ENCODE measurements at regions of chr5 and their contacts with region 1.

Region 1: DNA sequence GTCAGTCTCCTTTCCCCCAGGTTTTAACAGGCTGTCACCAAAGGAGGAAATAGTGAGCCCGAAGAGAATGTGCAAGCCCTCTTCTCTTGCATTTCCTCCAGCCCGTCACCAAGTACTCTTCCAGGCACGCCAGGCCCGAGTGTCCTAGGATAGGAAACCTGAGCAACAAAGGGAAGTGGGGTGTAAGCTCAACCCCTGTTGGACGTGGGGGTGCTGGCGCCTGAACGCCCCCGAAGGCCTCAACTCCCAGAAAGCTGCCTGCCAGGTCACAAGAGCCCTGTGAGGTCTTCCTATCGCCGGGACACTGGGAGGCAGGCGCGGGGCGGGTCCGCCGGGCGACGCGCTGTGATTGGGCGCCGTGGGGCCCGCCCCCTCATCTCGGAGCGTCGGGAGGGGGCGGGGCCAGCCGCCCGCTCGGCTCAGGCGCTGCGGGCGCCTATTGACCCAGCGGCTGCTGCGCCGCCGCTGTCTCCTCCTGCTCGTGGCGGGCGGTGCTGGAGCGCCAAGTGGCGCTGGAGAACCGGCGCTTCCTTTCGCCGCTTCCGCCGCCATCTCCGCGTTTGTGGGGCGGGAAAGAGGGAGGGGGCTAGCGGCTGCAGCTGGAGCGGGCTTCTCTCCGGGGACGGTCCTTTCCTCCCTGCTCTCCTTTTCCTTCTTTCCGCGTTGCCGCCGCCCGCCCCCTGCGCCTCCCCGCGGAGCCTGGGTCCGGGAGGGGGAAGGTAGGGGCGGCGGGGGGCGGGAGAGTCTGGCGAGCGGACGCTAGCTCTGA is 572 bp upstream of the MAN2A1 start:
- DNase-seq: peak; percentile 92
- H3K4me3 Mint-ChIP-seq: peak overlapping the region; percentile 96
- H3K27ac Mint-ChIP-seq: peak overlapping the region; percentile 97
- H3K4me1 Mint-ChIP-seq: peaks cover 35% of the 10 kb centered on the region
- H3K27me3 Mint-ChIP-seq: no peaks in the 10 kb centered on the region
- CTCF ChIP-seq: peak; percentile 12

Region 2: GRCh38 chr5:108642167-108642906 is 1046.8 kb before region 1 on chr5:
- CTCF ChIA-PET with region 1: no interaction called
- intact Hi-C with region 1: loop called (anchors 2 kb)
- DNase-seq: peak; percentile 82
- H3K4me3 Mint-ChIP-seq: peak overlapping the region; percentile 31
- H3K27ac Mint-ChIP-seq: peak overlapping the region; percentile 30
- H3K4me1 Mint-ChIP-seq: peaks cover 17% of the 10 kb centered on the region
- H3K27me3 Mint-ChIP-seq: no peaks in the 10 kb centered on the region
- CTCF ChIP-seq: peak; percentile 93

Region 3: DNA sequence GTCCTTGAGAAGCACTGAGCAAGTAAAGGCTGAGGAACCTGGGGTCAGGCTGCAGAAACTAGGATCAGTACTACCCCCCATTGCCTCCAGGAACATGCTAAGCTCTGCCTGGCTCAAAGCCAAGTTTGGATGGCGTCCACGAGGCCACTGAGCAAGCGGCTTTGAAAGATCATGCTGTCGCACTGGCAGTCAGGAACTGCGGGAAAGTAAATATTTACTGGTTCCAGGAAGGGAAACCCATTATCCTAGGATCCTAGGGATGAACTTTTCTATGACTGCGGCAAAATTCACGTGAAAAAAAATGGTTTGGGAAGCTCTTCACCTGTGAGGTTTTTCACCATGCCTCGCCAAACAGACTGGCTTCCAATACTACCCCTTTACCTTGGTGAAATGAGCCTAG is 204.1 kb before region 1 on chr5:
- CTCF ChIA-PET with region 1: no interaction called
- intact Hi-C with region 1: loop called (anchors 10 kb)
- DNase-seq: peak; percentile 15
- H3K4me3 Mint-ChIP-seq: no peak overlapping the region
- H3K27ac Mint-ChIP-seq: no peak overlapping the region
- H3K4me1 Mint-ChIP-seq: no peaks in the 10 kb centered on the region
- H3K27me3 Mint-ChIP-seq: no peaks in the 10 kb centered on the region
- CTCF ChIP-seq: no peak

Region 4: GRCh38 chr5:110054240-110054639 is 365.1 kb after region 1 on chr5:
- CTCF ChIA-PET with region 1: no interaction called
- intact Hi-C with region 1: loop called (anchors 10 kb)
- DNase-seq: peak; percentile 69
- H3K4me3 Mint-ChIP-seq: no peak overlapping the region
- H3K27ac Mint-ChIP-seq: no peak overlapping the region
- H3K4me1 Mint-ChIP-seq: no peaks in the 10 kb centered on the region
- H3K27me3 Mint-ChIP-seq: peaks cover 20% of the 10 kb centered on the region
- CTCF ChIP-seq: no peak